Tibial artery (tissue), 4 donors: ENCODE measurements at regions of chr1 and their contacts with region 1.

Region 1: GRCh38 chr1:86499987-86500593 is 31.4 kb downstream of the CLCA1 start:
- DNase-seq: no peak
- H3K4me3 ChIP-seq: no peak overlapping the region
- H3K27ac ChIP-seq: no peak overlapping the region
- H3K4me1 ChIP-seq: peaks cover 0 to 6% (median 2%) of the 10 kb centered on the region in 4 donors
- H3K27me3 ChIP-seq: peaks cover 0 to 4% of the 10 kb centered on the region in 2 donors
- CTCF ChIP-seq: peak; percentile 60 to 61

Region 2: GRCh38 chr1:86370601-86371022 is 129.5 kb before region 1 on chr1:
- intact Hi-C with region 1: loop called (anchors 10 kb)
- DNase-seq: no peak
- H3K4me3 ChIP-seq: no peak overlapping the region
- H3K27ac ChIP-seq: no peak overlapping the region
- H3K4me1 ChIP-seq: no peaks in the 10 kb centered on the region
- H3K27me3 ChIP-seq: no peaks in the 10 kb centered on the region
- CTCF ChIP-seq: no peak